Activated B cell treated with CpG ODN at 0.5 μM for 24 hours (primary cell): ENCODE measurements at regions of chr15 and their contacts with region 1.

Region 1: GRCh38 chr15:90598031-90598577 is 68.4 kb downstream of the CRTC3 start:
- DNase-seq: peak; percentile 24
- ATAC-seq: no peak
- H3K4me3 Mint-ChIP-seq: peak overlapping the region; percentile 39
- H3K27ac Mint-ChIP-seq: peak overlapping the region; percentile 98
- H3K4me1 Mint-ChIP-seq: peaks cover 80% of the 10 kb centered on the region
- H3K27me3 Mint-ChIP-seq: no peaks in the 10 kb centered on the region
- CTCF ChIP-seq: no peak

Region 2: DNA sequence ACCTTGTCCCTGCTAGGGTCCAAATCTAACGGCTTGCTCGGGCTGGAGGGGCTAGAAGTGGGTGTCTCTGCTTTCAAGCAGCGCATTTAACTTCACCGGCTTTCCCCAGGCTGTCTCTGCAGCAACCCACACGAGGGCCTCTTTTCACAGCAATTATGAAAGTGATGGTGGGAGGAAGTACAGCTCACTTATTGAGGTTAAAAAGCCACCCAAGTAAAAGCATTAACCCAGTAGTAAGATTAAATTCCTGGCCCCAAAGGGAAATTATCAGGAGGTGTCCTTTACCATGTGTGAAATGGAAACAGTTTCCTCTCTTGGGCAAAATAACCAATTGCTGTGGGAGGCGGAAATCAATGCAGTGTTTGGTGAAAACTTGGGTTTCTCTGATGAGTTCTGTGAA is 291.5 kb before region 1 on chr15:
- CTCF ChIA-PET with region 1: no interaction called
- POLR2A ChIA-PET with region 1: no interaction called
- intact Hi-C with region 1: no loop called
- DNase-seq: no peak
- ATAC-seq: peak; percentile 72
- H3K4me3 Mint-ChIP-seq: no peak overlapping the region
- H3K27ac Mint-ChIP-seq: peak overlapping the region; percentile 12
- H3K4me1 Mint-ChIP-seq: peaks cover 14% of the 10 kb centered on the region
- H3K27me3 Mint-ChIP-seq: no peaks in the 10 kb centered on the region
- CTCF ChIP-seq: no peak

Region 3: GRCh38 chr15:90320061-90320884 is 277.8 kb before region 1 on chr15:
- CTCF ChIA-PET with region 1: interaction called, 8 read pairs
- POLR2A ChIA-PET with region 1: interaction called, 3 read pairs
- intact Hi-C with region 1: loop called (anchors 1 kb)
- DNase-seq: peak; percentile 42
- ATAC-seq: peak; percentile 100
- H3K4me3 Mint-ChIP-seq: peak overlapping the region; percentile 5
- H3K27ac Mint-ChIP-seq: no peak overlapping the region
- H3K4me1 Mint-ChIP-seq: peaks cover 2% of the 10 kb centered on the region
- H3K27me3 Mint-ChIP-seq: no peaks in the 10 kb centered on the region
- CTCF ChIP-seq: no peak

Region 4: DNA sequence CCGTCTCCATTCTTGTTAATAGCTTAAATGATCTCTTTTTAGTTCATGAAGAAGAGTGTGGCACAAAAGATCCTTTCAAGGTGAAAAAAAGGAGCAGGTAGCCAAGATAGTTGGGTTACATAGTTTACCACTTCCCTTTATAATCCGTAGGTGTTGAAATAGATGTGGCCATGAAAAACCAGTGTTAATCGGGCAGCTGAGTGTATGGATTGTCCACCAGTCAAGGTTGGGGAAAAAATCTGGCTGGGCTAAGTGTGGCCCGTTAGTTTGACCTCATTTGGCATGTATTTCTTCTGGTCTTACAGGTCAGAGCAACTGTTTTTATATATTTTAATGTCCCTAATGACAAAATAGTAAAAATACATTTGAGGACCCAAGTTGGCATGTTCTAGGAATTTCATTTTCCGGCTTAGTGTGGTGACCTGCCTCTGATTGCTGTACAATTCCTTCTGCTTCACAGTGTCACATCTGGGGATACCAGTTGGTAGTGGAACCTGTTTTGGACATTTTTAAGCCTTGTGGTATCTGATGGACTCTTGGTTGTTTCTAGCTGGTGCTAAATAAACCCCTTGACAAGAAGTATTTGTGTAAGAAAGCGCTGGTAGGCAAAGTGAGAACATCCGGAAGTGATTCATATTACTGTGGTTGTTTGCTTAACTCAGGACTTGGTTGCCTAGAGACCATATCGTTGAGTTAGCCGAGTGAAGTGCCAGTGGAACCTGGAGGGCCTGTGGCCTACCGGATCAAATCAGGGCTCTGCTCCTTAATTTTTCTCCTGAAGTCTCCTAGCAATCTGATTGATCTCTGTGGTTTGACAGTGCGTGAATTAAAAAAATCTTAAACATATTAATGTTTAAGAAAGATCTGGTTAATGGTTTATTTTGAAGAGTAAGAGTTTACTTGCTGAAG is 197.4 kb before region 1 on chr15:
- CTCF ChIA-PET with region 1: no interaction called
- POLR2A ChIA-PET with region 1: no interaction called
- intact Hi-C with region 1: loop called (anchors 5 kb)
- DNase-seq: no peak
- ATAC-seq: peak; percentile 93
- H3K4me3 Mint-ChIP-seq: peak overlapping the region; percentile 73
- H3K27ac Mint-ChIP-seq: peak overlapping the region; percentile 96
- H3K4me1 Mint-ChIP-seq: peaks cover 63% of the 10 kb centered on the region
- H3K27me3 Mint-ChIP-seq: no peaks in the 10 kb centered on the region
- CTCF ChIP-seq: no peak

Region 5: GRCh38 chr15:90489944-90490343 is 108.2 kb before region 1 on chr15:
- CTCF ChIA-PET with region 1: interaction called, 3 read pairs
- POLR2A ChIA-PET with region 1: interaction called, 3 read pairs
- intact Hi-C with region 1: loop called (anchors 5 kb)
- DNase-seq: no peak
- ATAC-seq: no peak
- H3K4me3 Mint-ChIP-seq: no peak overlapping the region
- H3K27ac Mint-ChIP-seq: no peak overlapping the region
- H3K4me1 Mint-ChIP-seq: no peaks in the 10 kb centered on the region
- H3K27me3 Mint-ChIP-seq: no peaks in the 10 kb centered on the region
- CTCF ChIP-seq: no peak

Region 6: GRCh38 chr15:90529371-90530249 is 68.5 kb before region 1 on chr15 and contains the start of gene CRTC3:
- CTCF ChIA-PET with region 1: interaction called, 7 read pairs
- POLR2A ChIA-PET with region 1: interaction called, 28 read pairs
- intact Hi-C with region 1: loop called (anchors 1 kb)
- DNase-seq: peak; percentile 75
- ATAC-seq: peak; percentile 85
- H3K4me3 Mint-ChIP-seq: peak within 1 kb of the TSS; percentile 95
- H3K27ac Mint-ChIP-seq: peak within 1 kb of the TSS; percentile 88
- H3K4me1 Mint-ChIP-seq: peaks cover 45% of the 10 kb centered on the region
- H3K27me3 Mint-ChIP-seq: no peaks in the 10 kb centered on the region
- CTCF ChIP-seq: no peak
- total RNA-seq, gene CRTC3: 54.7 and 65.0 TPM in 2 replicates

Region 7: GRCh38 chr15:90557186-90558084 is 40.7 kb before region 1 on chr15:
- CTCF ChIA-PET with region 1: interaction called, 4 read pairs
- POLR2A ChIA-PET with region 1: interaction called, 5 read pairs
- intact Hi-C with region 1: loop called (anchors 2 kb)
- DNase-seq: no peak
- ATAC-seq: no peak
- H3K4me3 Mint-ChIP-seq: no peak overlapping the region
- H3K27ac Mint-ChIP-seq: peak overlapping the region; percentile 16
- H3K4me1 Mint-ChIP-seq: peaks cover 81% of the 10 kb centered on the region
- H3K27me3 Mint-ChIP-seq: no peaks in the 10 kb centered on the region
- CTCF ChIP-seq: no peak

Region 8: DNA sequence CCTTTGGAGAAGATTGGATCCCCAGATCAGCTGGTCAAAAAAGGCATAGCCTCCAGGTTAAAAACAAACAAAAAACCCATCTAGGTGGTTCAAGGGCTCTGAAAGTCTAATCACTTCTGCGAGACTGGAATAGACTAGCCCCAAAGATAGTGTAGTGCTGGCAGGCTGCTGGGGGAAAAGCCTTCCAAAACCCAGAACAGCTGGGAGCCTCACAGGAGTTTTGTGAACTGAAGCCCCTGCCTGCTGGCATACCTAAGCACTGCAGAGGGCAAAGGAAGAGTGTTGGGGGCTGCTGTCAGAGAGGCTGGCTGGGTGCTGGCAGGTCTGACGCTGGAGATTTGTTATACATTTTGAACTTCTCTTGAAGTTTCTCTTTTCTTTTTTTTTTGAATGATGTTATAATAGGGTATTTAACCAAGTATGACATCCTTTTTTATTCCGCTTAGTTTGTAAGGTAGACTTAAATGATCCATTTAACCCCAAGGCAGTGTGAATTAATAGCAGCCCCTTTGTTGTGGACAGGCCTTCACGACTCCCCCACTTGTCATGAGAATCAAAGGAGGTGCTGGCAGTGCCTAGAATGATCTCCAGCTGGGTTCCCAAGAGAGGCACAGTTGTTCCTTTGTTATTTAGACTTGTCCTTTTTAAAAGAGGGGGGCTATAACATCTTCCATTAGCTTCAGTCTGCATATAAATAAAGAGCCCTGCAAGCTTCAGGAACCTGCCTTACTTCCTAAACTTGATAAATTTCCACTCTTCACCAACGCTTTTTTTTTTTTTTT is 14.4 kb before region 1 on chr15:
- CTCF ChIA-PET with region 1: interaction called, 3 read pairs
- POLR2A ChIA-PET with region 1: interaction called, 5 read pairs
- intact Hi-C with region 1: loop called (anchors 2 kb)
- DNase-seq: no peak
- ATAC-seq: no peak
- H3K4me3 Mint-ChIP-seq: peak overlapping the region; percentile 47
- H3K27ac Mint-ChIP-seq: peak overlapping the region; percentile 62
- H3K4me1 Mint-ChIP-seq: peaks cover 74% of the 10 kb centered on the region
- H3K27me3 Mint-ChIP-seq: no peaks in the 10 kb centered on the region
- CTCF ChIP-seq: no peak